ENCODE measurements at regions of chr3 and their contacts with region 1.

Region 1: GRCh38 chr3:15500107-15500724 is 21.3 kb downstream of the COLQ start:
- DNase-seq: no peak
- H3K4me3 ChIP-seq: no peak overlapping the region
- H3K27ac ChIP-seq: no peak overlapping the region
- H3K4me1 ChIP-seq: peaks cover 0 to 23% of the 10 kb centered on the region in 2 experiments; a peak in 1 of 4 replicates
- H3K27me3 ChIP-seq: no peaks in the 10 kb centered on the region
- CTCF ChIP-seq: no peak
- EP300 ChIP-seq: no peak
- RAD21 ChIP-seq: no peak

Region 2: DNA sequence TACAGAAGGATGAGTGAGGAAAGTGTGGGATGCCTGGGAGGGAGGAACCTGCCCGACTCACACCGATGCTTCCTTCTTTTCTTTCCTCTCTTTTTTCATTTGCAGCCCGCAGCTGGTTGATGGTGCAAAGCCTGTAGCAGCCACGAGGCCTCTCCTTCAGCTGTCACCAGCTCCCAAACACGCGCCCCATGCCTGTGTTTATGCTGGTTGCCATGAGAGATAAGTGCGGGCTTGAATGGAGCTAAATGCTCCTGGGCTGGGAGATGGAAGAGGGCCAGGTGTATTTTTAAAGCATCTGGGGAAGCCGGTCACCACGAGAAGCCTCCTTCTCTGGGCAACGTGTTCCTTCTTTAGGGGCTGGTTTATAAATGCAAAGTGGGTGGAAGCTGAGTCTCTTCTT is 11.9 kb after region 1 on chr3:
- CTCF ChIA-PET with region 1: interaction called, 21 read pairs
- POLR2A ChIA-PET with region 1: no interaction called
- DNase-seq: no peak
- H3K4me3 ChIP-seq: no peak overlapping the region
- H3K27ac ChIP-seq: no peak overlapping the region
- H3K4me1 ChIP-seq: peaks cover 0 to 19% of the 10 kb centered on the region in 2 experiments; a peak in 1 of 4 replicates
- H3K27me3 ChIP-seq: no peaks in the 10 kb centered on the region
- CTCF ChIP-seq: no peak
- EP300 ChIP-seq: no peak
- RAD21 ChIP-seq: no peak

Measured in SK-N-SH (cell line).